ENCODE measurements at regions of chr3 and their contacts with region 1.

Region 1: DNA sequence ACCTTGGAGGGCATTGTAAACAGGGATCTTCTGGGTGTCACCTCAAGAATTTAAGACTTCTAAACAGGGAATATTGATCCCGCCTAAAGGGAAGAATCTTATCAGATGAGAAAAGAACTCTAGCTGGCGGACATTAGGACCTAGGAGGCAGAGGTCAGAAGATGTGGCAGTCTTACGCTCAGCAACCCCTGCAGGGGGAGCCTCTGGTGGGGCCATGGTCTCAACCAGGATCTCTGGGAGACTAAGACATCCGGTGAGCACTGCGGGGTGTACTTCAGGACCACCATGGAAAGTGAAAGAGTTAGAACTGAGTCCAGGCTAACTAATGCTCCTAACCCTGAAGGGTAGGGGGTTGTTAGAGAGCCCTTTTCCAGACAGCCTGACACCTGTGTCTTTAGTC is 295.2 kb downstream of the VGLL3 start:
- DNase-seq: no peak
- ATAC-seq: no peak
- H3K4me3 Mint-ChIP-seq: no peak overlapping the region
- H3K27ac Mint-ChIP-seq: no peak overlapping the region
- H3K4me1 Mint-ChIP-seq: no peaks in the 10 kb centered on the region
- H3K27me3 Mint-ChIP-seq: no peaks in the 10 kb centered on the region
- CTCF ChIP-seq: no peak

Region 2: DNA sequence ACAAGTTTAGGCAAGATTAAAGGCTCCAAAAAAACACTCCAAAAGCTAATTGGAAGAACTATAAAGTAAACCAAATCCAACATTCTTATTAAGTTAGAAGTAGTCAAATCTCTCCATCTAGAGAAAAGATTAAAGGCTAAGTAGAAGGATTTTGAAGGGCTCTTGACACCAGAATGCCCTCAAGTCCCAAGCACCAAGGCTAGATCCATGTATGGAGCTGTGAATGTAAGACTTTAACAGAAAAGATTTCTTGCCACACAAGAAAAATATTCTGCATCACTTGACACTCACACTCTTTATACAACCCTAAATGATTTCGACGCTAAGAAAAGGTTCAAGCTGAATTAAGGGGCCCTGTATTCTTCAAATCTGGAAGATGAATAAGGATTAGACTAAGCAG is 50.0 kb before region 1 on chr3:
- CTCF ChIA-PET with region 1: no interaction called
- POLR2A ChIA-PET with region 1: no interaction called
- intact Hi-C with region 1: no loop called
- DNase-seq: no peak
- ATAC-seq: no peak
- H3K4me3 Mint-ChIP-seq: no peak overlapping the region
- H3K27ac Mint-ChIP-seq: no peak overlapping the region
- H3K4me1 Mint-ChIP-seq: no peaks in the 10 kb centered on the region
- H3K27me3 Mint-ChIP-seq: no peaks in the 10 kb centered on the region
- CTCF ChIP-seq: no peak

Region 3: GRCh38 chr3:86748015-86748414 is 52.3 kb after region 1 on chr3:
- CTCF ChIA-PET with region 1: no interaction called
- POLR2A ChIA-PET with region 1: no interaction called
- intact Hi-C with region 1: loop called (anchors 10 kb)
- DNase-seq: no peak
- ATAC-seq: no peak
- H3K4me3 Mint-ChIP-seq: no peak overlapping the region
- H3K27ac Mint-ChIP-seq: no peak overlapping the region
- H3K4me1 Mint-ChIP-seq: no peaks in the 10 kb centered on the region
- H3K27me3 Mint-ChIP-seq: no peaks in the 10 kb centered on the region
- CTCF ChIP-seq: no peak